AG04449 (cell line): ENCODE measurements at regions of chr5 and their contacts with region 1.

Region 1: GRCh38 chr5:137629646-137630045 is 106.2 kb downstream of the KLHL3 start:
- DNase-seq: no peak
- H3K4me3 ChIP-seq: no peak overlapping the region
- CTCF ChIP-seq: peak; percentile 60

Region 2: DNA sequence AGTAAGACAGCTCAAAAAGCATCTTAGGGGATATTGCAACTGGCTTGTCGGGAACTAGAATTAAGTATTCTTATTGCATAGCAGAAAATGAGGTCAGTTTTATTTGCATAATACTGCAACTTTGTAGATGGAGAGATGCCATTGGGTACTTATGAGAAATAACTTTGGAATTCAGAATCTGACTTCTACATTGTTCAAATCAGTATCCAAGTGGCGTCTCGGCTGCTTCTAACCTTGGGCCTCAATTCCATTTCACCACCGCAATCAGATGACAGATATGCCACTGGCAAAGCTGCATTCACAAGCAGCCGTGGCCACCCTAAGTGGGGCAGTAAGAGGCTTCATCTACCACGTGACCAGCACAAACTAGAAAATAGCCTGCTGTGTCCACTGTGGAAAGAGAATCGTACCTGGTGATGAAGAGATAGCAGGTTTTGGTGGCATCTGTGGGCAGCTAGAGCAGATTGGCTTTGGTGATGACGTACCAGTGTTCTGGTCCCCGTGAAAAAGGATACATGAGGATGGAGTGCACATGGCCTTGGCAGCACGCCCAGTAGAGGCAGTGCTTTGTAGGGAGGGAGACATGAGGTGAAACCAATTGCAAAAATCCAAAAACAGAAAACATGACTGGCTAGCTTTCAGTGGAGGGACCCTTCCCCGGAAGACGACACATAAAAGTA is 10.3 kb before region 1 on chr5:
- CTCF ChIA-PET with region 1: interaction called, 36 read pairs
- POLR2A ChIA-PET with region 1: no interaction called
- DNase-seq: peak; percentile 88
- H3K4me3 ChIP-seq: no peak overlapping the region
- CTCF ChIP-seq: no peak

Region 3: GRCh38 chr5:137649228-137649935 is 19.7 kb after region 1 on chr5:
- CTCF ChIA-PET with region 1: interaction called, 11 read pairs
- POLR2A ChIA-PET with region 1: no interaction called
- DNase-seq: peak; percentile 33
- H3K4me3 ChIP-seq: no peak overlapping the region
- CTCF ChIP-seq: no peak

Region 4: GRCh38 chr5:137743031-137743640 is 113.5 kb after region 1 on chr5:
- CTCF ChIA-PET with region 1: interaction called, 748 read pairs
- POLR2A ChIA-PET with region 1: no interaction called
- DNase-seq: no peak
- H3K4me3 ChIP-seq: no peak overlapping the region
- CTCF ChIP-seq: peak; percentile 56

Region 5: GRCh38 chr5:138065102-138065501 is 435.5 kb after region 1 on chr5:
- CTCF ChIA-PET with region 1: interaction called, 73 read pairs
- POLR2A ChIA-PET with region 1: no interaction called
- DNase-seq: no peak
- H3K4me3 ChIP-seq: no peak overlapping the region
- CTCF ChIP-seq: peak; percentile 22